ENCODE measurements at regions of chr5 and their contacts with region 1.

Region 1: DNA sequence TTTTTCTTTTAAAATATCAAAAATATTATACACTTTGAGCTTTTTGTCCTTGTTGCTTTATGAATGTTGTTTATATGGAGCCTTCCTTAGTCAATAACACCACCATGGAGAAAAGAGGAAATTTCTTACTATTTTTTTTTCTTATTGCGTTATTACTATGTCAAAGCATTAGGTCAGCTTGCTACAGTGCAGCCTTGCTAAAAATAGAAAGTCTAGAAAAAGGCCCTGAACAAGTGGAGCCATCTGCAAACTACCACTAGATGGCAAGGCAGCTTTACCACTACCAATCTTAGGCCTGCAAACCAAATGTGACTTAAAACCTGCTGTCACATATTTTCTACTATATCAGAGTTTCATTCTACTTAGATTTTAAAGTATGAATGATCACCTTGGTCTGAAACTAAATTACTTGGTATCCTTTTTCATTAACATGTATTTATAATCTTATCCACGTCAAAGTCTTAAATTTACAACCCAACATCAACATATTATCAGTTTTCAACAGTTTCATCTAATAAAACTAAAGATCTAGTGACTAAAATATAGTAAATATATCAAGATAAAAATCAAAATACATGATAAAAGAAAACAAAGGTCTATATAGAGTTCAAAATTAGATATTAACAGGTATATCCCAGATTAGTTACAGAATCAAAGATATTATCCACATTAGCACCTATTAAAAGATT is 113.1 kb upstream of the ACOT12 start:
- DNase-seq: peak; percentile 85
- ATAC-seq: peak; percentile 99
- H3K4me3 ChIP-seq: no peak overlapping the region
- H3K27ac ChIP-seq: no peak overlapping the region
- H3K4me1 ChIP-seq: no peaks in the 10 kb centered on the region
- H3K27me3 ChIP-seq: no peaks in the 10 kb centered on the region
- CTCF ChIP-seq: peak; percentile 85

Region 2: GRCh38 chr5:80763873-80764647 is 743.0 kb before region 1 on chr5:
- CTCF ChIA-PET with region 1: no interaction called
- POLR2A ChIA-PET with region 1: no interaction called
- in situ Hi-C with region 1: no loop called
- intact Hi-C with region 1: no loop called
- DNase-seq: no peak
- ATAC-seq: no peak
- H3K4me3 ChIP-seq: no peak overlapping the region
- H3K27ac ChIP-seq: no peak overlapping the region
- H3K4me1 ChIP-seq: no peaks in the 10 kb centered on the region
- H3K27me3 ChIP-seq: no peaks in the 10 kb centered on the region
- CTCF ChIP-seq: no peak

Region 3: GRCh38 chr5:81486711-81487110 is 20.3 kb before region 1 on chr5:
- CTCF ChIA-PET with region 1: no interaction called
- POLR2A ChIA-PET with region 1: no interaction called
- in situ Hi-C with region 1: no loop called
- intact Hi-C with region 1: no loop called
- DNase-seq: no peak
- ATAC-seq: no peak; the same call in 1 of the 2 replicates
- H3K4me3 ChIP-seq: no peak overlapping the region
- H3K27ac ChIP-seq: no peak overlapping the region
- H3K4me1 ChIP-seq: no peaks in the 10 kb centered on the region
- H3K27me3 ChIP-seq: no peaks in the 10 kb centered on the region
- CTCF ChIP-seq: no peak

Region 4: GRCh38 chr5:81838307-81838906 is 331.4 kb after region 1 on chr5:
- CTCF ChIA-PET with region 1: no interaction called
- POLR2A ChIA-PET with region 1: no interaction called
- in situ Hi-C with region 1: no loop called
- intact Hi-C with region 1: loop called (anchors 5 kb)
- DNase-seq: no peak
- ATAC-seq: peak; percentile 88; the same call in 1 of the 2 replicates
- H3K4me3 ChIP-seq: no peak overlapping the region
- H3K27ac ChIP-seq: no peak overlapping the region
- H3K4me1 ChIP-seq: no peaks in the 10 kb centered on the region
- H3K27me3 ChIP-seq: no peaks in the 10 kb centered on the region
- CTCF ChIP-seq: peak; percentile 76

Region 5: DNA sequence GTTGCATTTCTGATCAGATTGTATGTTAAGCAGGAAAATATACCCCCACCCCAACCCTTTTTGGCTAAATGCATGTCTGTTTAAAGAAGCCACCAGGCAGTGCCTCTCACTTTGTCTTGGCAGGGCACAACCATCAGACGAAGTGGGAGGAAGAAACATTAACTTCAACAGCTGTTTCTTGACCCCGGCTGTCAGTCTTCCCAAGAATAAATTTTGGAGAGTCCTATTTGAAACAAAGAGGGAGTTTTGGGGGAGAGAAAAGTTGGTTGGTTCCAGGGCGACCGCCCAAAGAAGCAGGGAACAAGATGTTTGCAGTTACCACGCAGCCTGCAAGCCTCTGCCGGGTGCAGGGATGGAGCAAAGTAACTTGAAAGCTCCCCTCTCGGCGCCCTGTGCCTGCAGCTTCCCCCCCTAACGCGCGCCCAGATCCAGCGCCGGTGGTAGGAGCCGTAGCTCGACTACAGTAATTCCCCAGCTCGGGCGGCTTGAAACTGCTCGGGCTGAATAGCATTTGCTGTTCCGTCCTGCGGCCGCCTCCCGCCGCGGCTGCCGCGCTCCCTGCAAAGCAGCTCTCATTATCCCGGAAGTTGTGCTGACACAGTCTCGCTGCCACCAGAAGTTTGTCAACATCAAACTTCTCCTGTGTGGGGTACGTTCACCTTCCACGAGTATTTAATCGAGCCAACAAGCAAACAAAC is 344.6 kb after region 1 on chr5:
- CTCF ChIA-PET with region 1: no interaction called
- POLR2A ChIA-PET with region 1: no interaction called
- in situ Hi-C with region 1: no loop called
- intact Hi-C with region 1: loop called (anchors 5 kb)
- DNase-seq: no peak
- ATAC-seq: peak; percentile 92
- H3K4me3 ChIP-seq: peak overlapping the region; percentile 34 to 55
- H3K27ac ChIP-seq: peak overlapping the region; percentile 89
- H3K4me1 ChIP-seq: peaks cover 28% of the 10 kb centered on the region
- H3K27me3 ChIP-seq: no peaks in the 10 kb centered on the region
- CTCF ChIP-seq: no peak